Ascending aorta (tissue), 2 donors: ENCODE measurements at regions of chr6 and their contacts with region 1.

Region 1: DNA sequence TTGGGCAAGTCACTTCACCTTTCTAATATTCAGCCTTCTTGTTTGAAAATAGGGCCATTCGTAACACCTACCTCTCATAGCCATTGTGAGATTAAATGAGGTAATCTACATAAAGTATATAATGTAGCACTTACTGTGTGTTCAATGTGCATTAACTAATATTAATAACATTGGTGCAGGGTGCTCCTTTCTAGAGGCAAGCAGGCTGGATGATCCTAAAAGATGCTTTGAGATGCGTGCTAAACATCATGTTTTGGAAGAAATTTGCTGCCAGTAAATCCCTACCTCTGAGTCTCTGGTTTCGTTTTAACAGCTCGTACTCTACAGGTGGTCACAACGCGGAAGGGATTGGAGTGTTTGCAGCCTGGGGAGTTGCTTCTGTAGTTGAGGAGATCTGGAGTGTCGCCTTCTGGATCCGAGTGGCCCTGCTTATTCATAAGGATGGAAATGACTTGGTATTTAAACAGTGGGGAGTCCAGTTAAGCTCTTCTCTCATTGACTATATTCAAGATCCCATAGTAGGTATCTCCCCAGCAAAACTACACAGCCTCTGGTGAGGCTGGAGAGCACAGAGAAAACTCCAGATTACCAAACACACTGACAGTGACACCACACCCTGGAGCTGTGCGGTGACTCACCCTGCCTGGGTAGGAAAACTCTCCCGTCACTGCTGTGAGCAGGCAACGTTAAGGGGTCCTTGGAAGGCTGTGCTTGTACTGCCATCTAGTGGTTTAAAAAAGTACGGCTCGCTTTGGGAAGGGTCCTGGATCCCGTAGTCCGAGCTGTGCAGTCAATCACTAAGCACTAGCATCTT is 107.9 kb downstream of the MAP3K7 start:
- DNase-seq: peak; percentile 75 to 94
- H3K4me3 ChIP-seq: no peak overlapping the region
- H3K27ac ChIP-seq: no peak overlapping the region
- H3K4me1 ChIP-seq: no peaks in the 10 kb centered on the region
- H3K27me3 ChIP-seq: no peaks in the 10 kb centered on the region
- CTCF ChIP-seq: peak; percentile 83 to 89 (median 83)

Region 2: GRCh38 chr6:89940225-89941027 is 538.6 kb before region 1 on chr6:
- intact Hi-C with region 1: loop called (anchors 1 kb)
- DNase-seq: peak in 1 of 2 donors; percentile 78
- H3K4me3 ChIP-seq: no peak overlapping the region
- H3K27ac ChIP-seq: no peak overlapping the region
- H3K4me1 ChIP-seq: peaks cover 0 to 15% of the 10 kb centered on the region in 2 donors
- H3K27me3 ChIP-seq: no peaks in the 10 kb centered on the region
- CTCF ChIP-seq: peak; percentile 54 to 67 (median 59)

Region 3: GRCh38 chr6:89970609-89971337 is 508.2 kb before region 1 on chr6:
- intact Hi-C with region 1: loop called (anchors 1 kb)
- DNase-seq: peak in 1 of 2 donors; percentile 64
- H3K4me3 ChIP-seq: no peak overlapping the region
- H3K27ac ChIP-seq: no peak overlapping the region
- H3K4me1 ChIP-seq: no peaks in the 10 kb centered on the region
- H3K27me3 ChIP-seq: no peaks in the 10 kb centered on the region
- CTCF ChIP-seq: peak; percentile 50 to 73 (median 53)

Region 4: DNA sequence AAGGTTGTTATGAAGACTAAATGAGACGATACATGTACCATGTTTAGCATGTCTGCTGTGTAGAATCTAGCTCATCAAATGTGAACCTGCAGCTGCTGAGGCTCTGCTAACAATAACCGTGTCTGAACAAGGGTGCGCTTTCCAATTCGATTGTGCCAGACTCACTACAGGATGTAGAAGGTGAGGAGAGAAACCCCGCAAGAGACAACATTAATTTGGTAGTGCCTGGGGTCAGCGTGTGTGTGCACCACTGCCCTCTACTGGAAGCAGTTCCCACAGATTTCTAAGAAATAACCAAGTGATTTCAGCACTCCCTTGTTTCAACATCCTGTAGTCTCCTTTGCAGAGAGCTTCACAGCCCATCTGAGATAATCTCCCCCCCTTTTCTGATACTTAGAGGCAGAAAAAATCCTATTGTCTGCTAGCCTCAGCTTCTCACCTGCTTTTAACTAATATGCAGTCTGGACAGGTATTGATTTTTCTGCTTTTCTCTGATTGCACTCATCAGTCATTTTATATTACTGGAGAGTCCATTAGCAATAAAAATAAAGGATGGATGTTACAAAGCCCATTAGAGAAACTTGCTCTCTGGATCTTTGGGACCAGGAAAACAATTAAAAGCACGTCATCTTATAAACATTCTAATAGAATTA is 85.6 kb before region 1 on chr6:
- intact Hi-C with region 1: loop called (anchors 2 kb)
- DNase-seq: peak in 1 of 2 donors; percentile 78
- H3K4me3 ChIP-seq: no peak overlapping the region
- H3K27ac ChIP-seq: no peak overlapping the region
- H3K4me1 ChIP-seq: no peaks in the 10 kb centered on the region
- H3K27me3 ChIP-seq: no peaks in the 10 kb centered on the region
- CTCF ChIP-seq: peak; percentile 67 to 85 (median 76)

Region 5: DNA sequence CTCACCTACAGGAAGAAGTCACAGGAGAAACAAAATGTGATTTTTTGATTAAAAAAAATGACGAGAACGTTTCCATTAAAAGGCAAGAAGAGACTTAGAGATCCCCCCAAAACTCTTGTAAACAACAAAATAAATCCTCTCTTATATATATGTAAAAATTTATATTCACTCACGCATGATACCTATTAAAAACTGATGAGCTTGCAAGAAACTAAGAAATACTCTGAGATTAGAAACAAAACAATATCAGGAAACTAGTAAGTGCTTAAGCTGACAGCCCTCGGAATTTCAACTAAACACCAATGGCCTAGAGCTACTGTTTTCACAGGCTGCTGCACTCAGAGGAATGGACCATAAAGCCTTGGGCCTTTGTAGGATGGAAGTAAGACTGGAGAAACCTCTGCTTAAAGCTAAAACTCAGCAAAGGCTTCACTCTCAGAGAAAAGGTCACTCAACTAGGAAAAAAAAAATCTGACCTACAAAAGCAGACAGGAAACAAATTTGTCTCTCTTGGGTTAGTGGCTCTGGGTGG is 44.8 kb after region 1 on chr6:
- intact Hi-C with region 1: no loop called
- DNase-seq: no peak
- H3K4me3 ChIP-seq: no peak overlapping the region
- H3K27ac ChIP-seq: no peak overlapping the region
- H3K4me1 ChIP-seq: no peaks in the 10 kb centered on the region
- H3K27me3 ChIP-seq: no peaks in the 10 kb centered on the region
- CTCF ChIP-seq: no peak